PC-3 (cell line): ENCODE measurements at regions of chr12 and their contacts with region 1.

Region 1: DNA sequence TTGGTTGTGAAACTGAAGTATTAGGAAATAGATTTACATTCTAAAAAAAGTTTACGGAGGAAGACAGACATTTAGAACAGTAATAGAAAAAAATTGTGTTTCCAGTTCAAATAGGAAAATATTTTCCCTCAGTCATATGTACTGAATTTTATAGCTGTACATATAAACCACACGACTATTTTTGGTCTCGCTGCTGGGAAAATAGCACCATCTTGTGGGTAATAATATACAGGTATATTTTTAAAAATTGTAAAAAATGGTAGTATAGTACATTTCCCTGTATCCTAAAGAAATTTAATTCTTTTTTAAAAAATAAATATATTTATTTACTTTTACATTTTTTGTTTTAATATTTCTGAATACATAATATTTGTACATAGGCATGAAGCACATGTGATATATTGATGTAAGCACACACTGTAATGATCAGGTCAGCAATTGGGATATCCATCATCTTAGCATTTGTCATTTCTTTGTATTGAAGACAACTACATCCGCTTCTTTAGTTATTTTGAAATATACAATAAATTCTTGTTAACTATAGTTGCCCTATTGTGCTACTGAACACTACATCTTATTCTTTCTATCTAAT is 168.6 kb downstream of the ALX1 start:
- DNase-seq: peak; percentile 56
- ATAC-seq: no peak
- H3K4me3 ChIP-seq: no peak overlapping the region
- H3K27ac ChIP-seq: no peak overlapping the region
- H3K4me1 ChIP-seq: no peaks in the 10 kb centered on the region
- H3K27me3 ChIP-seq: no peaks in the 10 kb centered on the region
- CTCF ChIP-seq: peak; percentile 57

Region 2: DNA sequence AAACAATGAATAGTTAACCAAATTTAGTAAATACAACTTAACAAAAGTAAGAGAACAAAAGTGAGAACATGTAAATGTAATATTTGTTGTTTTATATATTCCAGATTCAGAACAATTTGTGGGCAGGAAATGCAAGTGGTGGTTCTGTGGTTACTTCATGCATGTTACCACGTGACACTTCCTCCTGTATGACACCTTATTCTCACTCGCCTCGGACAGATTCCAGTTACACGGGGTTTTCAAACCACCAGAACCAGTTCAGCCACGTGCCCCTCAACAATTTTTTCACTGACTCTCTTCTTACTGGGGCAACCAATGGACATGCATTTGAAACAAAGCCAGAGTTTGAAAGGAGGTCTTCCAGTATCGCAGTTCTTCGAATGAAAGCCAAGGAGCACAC is 147.6 kb before region 1 on chr12:
- CTCF ChIA-PET with region 1: interaction called, 3 read pairs
- POLR2A ChIA-PET with region 1: no interaction called
- intact Hi-C with region 1: loop called (anchors 5 kb)
- DNase-seq: no peak
- ATAC-seq: no peak
- H3K4me3 ChIP-seq: no peak overlapping the region
- H3K27ac ChIP-seq: no peak overlapping the region
- H3K4me1 ChIP-seq: no peaks in the 10 kb centered on the region
- H3K27me3 ChIP-seq: peaks cover 21% of the 10 kb centered on the region; the same call in 1 of the 2 replicates
- CTCF ChIP-seq: no peak

Region 3: DNA sequence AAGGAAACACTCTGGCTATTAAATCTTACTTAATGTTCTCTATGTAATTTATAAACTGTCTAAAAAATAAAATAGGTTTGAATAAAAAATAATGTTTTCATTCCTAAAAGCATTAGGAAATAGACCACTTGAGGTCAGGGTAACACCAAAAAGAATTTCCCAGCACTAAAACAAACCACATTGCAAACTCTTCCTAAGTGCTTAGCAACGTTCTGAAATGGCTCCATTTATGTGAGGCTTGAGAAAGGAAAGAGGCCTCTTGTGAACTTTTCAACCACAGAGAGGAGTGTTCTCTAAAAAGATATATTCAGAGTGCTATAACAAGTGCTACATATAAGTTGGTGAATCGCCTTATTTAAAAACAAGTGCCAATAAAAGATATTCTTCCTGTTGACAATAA is 125.9 kb before region 1 on chr12:
- CTCF ChIA-PET with region 1: no interaction called
- POLR2A ChIA-PET with region 1: no interaction called
- intact Hi-C with region 1: loop called (anchors 2 kb)
- DNase-seq: no peak
- ATAC-seq: no peak
- H3K4me3 ChIP-seq: no peak overlapping the region
- H3K27ac ChIP-seq: no peak overlapping the region
- H3K4me1 ChIP-seq: no peaks in the 10 kb centered on the region
- H3K27me3 ChIP-seq: no peaks in the 10 kb centered on the region
- CTCF ChIP-seq: no peak

Region 4: GRCh38 chr12:85424581-85425348 is 23.9 kb before region 1 on chr12:
- CTCF ChIA-PET with region 1: interaction called, 6 read pairs
- POLR2A ChIA-PET with region 1: no interaction called
- intact Hi-C with region 1: loop called (anchors 2 kb)
- DNase-seq: peak; percentile 66
- ATAC-seq: peak; percentile 72
- H3K4me3 ChIP-seq: no peak overlapping the region
- H3K27ac ChIP-seq: no peak overlapping the region
- H3K4me1 ChIP-seq: no peaks in the 10 kb centered on the region
- H3K27me3 ChIP-seq: peaks cover 21% of the 10 kb centered on the region; the same call in 1 of the 2 replicates
- CTCF ChIP-seq: peak; percentile 81

Region 5: GRCh38 chr12:85550924-85551323 is 102.3 kb after region 1 on chr12:
- CTCF ChIA-PET with region 1: no interaction called
- POLR2A ChIA-PET with region 1: no interaction called
- intact Hi-C with region 1: no loop called
- DNase-seq: no peak
- ATAC-seq: no peak
- H3K4me3 ChIP-seq: no peak overlapping the region
- H3K27ac ChIP-seq: no peak overlapping the region
- H3K4me1 ChIP-seq: no peaks in the 10 kb centered on the region
- H3K27me3 ChIP-seq: no peaks in the 10 kb centered on the region
- CTCF ChIP-seq: no peak